IMR-90 (cell line): ENCODE measurements at regions of chr1 and their contacts with region 1.

Region 1: DNA sequence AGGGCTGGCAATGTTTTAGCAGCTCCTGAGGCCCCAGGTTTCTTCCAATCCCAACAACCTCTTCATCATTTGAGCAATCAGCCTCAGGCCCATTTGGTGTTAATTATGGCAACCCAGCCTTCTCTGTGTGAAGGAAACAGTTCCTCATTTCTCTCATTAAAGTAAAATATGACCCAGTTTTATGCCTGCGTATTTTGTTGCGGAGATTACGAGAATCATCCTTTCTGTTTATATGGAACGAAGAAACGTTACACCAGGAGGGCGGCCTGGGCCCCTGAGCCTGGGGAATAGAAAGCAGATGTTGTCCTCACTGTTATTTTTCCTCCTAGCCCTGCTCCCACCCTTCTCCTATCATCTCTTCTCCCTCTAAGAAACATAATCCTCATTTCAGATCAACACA is 332.2 kb upstream of the USP24 start:
- DNase-seq: peak; percentile 31
- ATAC-seq: peak; percentile 38; the same call in 1 of the 2 replicates
- H3K4me3 ChIP-seq: no peak overlapping the region
- H3K27ac ChIP-seq: peak overlapping the region; percentile 68; the same call in 1 of the 2 replicates
- H3K4me1 ChIP-seq: peaks cover 3% of the 10 kb centered on the region; the same call in 1 of the 2 replicates
- H3K27me3 ChIP-seq: no peaks in the 10 kb centered on the region
- CTCF ChIP-seq: no peak
- POLR2A ChIP-seq: no peak
- RAD21 ChIP-seq: no peak

Region 2: GRCh38 chr1:55353707-55354620 is 193.4 kb before region 1 on chr1:
- CTCF ChIA-PET with region 1: no interaction called
- POLR2A ChIA-PET with region 1: no interaction called
- dilution Hi-C with region 1: no loop called
- in situ Hi-C with region 1: no loop called
- intact Hi-C with region 1: no loop called
- DNase-seq: peak; percentile 33
- ATAC-seq: no peak
- H3K4me3 ChIP-seq: no peak overlapping the region
- H3K27ac ChIP-seq: no peak overlapping the region
- H3K4me1 ChIP-seq: no peaks in the 10 kb centered on the region
- H3K27me3 ChIP-seq: peaks cover 2% of the 10 kb centered on the region
- CTCF ChIP-seq: no peak
- POLR2A ChIP-seq: no peak
- RAD21 ChIP-seq: no peak

Region 3: GRCh38 chr1:55478742-55479141 is 68.7 kb before region 1 on chr1:
- CTCF ChIA-PET with region 1: no interaction called
- POLR2A ChIA-PET with region 1: no interaction called
- dilution Hi-C with region 1: no loop called
- in situ Hi-C with region 1: no loop called
- intact Hi-C with region 1: no loop called
- DNase-seq: peak; percentile 51
- ATAC-seq: peak; percentile 48; the same call in 1 of the 2 replicates
- H3K4me3 ChIP-seq: no peak overlapping the region
- H3K27ac ChIP-seq: no peak overlapping the region
- H3K4me1 ChIP-seq: peaks cover 4% of the 10 kb centered on the region
- H3K27me3 ChIP-seq: no peaks in the 10 kb centered on the region
- CTCF ChIP-seq: peak; percentile 53
- POLR2A ChIP-seq: no peak
- RAD21 ChIP-seq: peak; percentile 67

Region 4: GRCh38 chr1:55597910-55598309 is 50.5 kb after region 1 on chr1:
- CTCF ChIA-PET with region 1: no interaction called
- POLR2A ChIA-PET with region 1: no interaction called
- dilution Hi-C with region 1: no loop called
- in situ Hi-C with region 1: no loop called
- intact Hi-C with region 1: loop called (anchors 5 kb)
- DNase-seq: no peak
- ATAC-seq: no peak
- H3K4me3 ChIP-seq: no peak overlapping the region
- H3K27ac ChIP-seq: no peak overlapping the region
- H3K4me1 ChIP-seq: no peaks in the 10 kb centered on the region; the same call in 1 of the 2 replicates
- H3K27me3 ChIP-seq: no peaks in the 10 kb centered on the region
- CTCF ChIP-seq: no peak
- POLR2A ChIP-seq: no peak
- RAD21 ChIP-seq: no peak